Activated CD4-positive, alpha-beta T cell treated with anti-CD3 and anti-CD28 coated beads for 36 hours (primary cell): ENCODE measurements at regions of chr14 and their contacts with region 1.

Region 1: GRCh38 chr14:52402812-52403526 is 88.9 kb downstream of the PTGER2 start:
- DNase-seq: peak; percentile 64
- ATAC-seq: peak; percentile 94
- H3K4me3 Mint-ChIP-seq: no peak overlapping the region
- H3K27ac Mint-ChIP-seq: peak overlapping the region; percentile 3
- H3K4me1 Mint-ChIP-seq: peaks cover 47% of the 10 kb centered on the region
- H3K27me3 Mint-ChIP-seq: peaks cover 22% of the 10 kb centered on the region

Region 2: GRCh38 chr14:52313903-52314594 is 88.9 kb before region 1 on chr14 and contains the start of gene PTGER2:
- CTCF ChIA-PET with region 1: no interaction called
- POLR2A ChIA-PET with region 1: no interaction called
- intact Hi-C with region 1: loop called in 1 of 2 experiments (anchors 5 kb)
- DNase-seq: peak; percentile 83
- ATAC-seq: peak; percentile 62
- H3K4me3 Mint-ChIP-seq: peak within 1 kb of the TSS; percentile 87
- H3K27ac Mint-ChIP-seq: peak within 1 kb of the TSS; percentile 80
- H3K4me1 Mint-ChIP-seq: peaks cover 50% of the 10 kb centered on the region
- H3K27me3 Mint-ChIP-seq: peaks cover 53% of the 10 kb centered on the region
- total RNA-seq, gene PTGER2: 2.4 TPM

Region 3: DNA sequence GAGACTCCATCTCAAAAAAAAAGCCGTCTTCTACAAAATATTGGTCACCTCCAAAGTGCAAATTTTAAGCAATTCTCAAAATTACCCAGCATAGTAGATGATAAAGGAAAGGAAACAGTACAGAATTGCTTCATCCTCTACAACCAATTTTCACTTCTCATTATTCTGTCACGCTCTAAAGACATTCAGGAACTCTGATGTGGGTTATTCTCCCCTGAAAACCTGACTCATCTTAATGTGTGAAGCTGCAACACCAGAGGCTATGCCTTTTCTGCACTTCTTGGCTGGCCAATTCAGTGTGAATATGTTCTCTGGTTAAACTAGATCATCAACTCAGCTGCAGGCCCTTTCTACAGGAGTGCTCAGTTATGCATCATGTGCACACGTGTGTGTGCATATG is 77.8 kb before region 1 on chr14:
- CTCF ChIA-PET with region 1: interaction called, 3 read pairs
- POLR2A ChIA-PET with region 1: no interaction called
- intact Hi-C with region 1: loop called (anchors 1 kb)
- DNase-seq: peak; percentile 45
- ATAC-seq: peak; percentile 87
- H3K4me3 Mint-ChIP-seq: no peak overlapping the region
- H3K27ac Mint-ChIP-seq: no peak overlapping the region
- H3K4me1 Mint-ChIP-seq: peaks cover 43% of the 10 kb centered on the region
- H3K27me3 Mint-ChIP-seq: peaks cover 8% of the 10 kb centered on the region

Region 4: GRCh38 chr14:52351233-52352060 is 51.5 kb before region 1 on chr14:
- CTCF ChIA-PET with region 1: no interaction called
- POLR2A ChIA-PET with region 1: no interaction called
- intact Hi-C with region 1: loop called (anchors 2 kb)
- DNase-seq: no peak
- ATAC-seq: peak; percentile 55
- H3K4me3 Mint-ChIP-seq: peak overlapping the region; percentile 13
- H3K27ac Mint-ChIP-seq: peak overlapping the region; percentile 68
- H3K4me1 Mint-ChIP-seq: peaks cover 52% of the 10 kb centered on the region
- H3K27me3 Mint-ChIP-seq: peaks cover 5% of the 10 kb centered on the region

Region 5: GRCh38 chr14:52467515-52468266 is 64.7 kb after region 1 on chr14:
- CTCF ChIA-PET with region 1: interaction called, 3 read pairs
- POLR2A ChIA-PET with region 1: no interaction called
- intact Hi-C with region 1: loop called (anchors 2 kb)
- DNase-seq: peak; percentile 13
- ATAC-seq: peak; percentile 97
- H3K4me3 Mint-ChIP-seq: no peak overlapping the region
- H3K27ac Mint-ChIP-seq: no peak overlapping the region
- H3K4me1 Mint-ChIP-seq: peaks cover 7% of the 10 kb centered on the region
- H3K27me3 Mint-ChIP-seq: no peaks in the 10 kb centered on the region